Activated CD8-positive, alpha-beta memory T cell treated with anti-CD3 and anti-CD28 coated beads, Interleukin-2, amount 10 ng/mL, durations not matched to agents 7 days and 5 days (primary cell): ENCODE measurements at regions of chr17 and their contacts with region 1.

Region 1: GRCh38 chr17:74296548-74296936 is 22.5 kb downstream of the DNAI2 start:
- DNase-seq: peak; percentile 64
- ATAC-seq: no peak
- H3K4me3 Mint-ChIP-seq: no peak overlapping the region
- H3K27ac Mint-ChIP-seq: no peak overlapping the region
- H3K4me1 Mint-ChIP-seq: peaks cover 23% of the 10 kb centered on the region
- H3K27me3 Mint-ChIP-seq: peaks cover 3% of the 10 kb centered on the region

Region 2: DNA sequence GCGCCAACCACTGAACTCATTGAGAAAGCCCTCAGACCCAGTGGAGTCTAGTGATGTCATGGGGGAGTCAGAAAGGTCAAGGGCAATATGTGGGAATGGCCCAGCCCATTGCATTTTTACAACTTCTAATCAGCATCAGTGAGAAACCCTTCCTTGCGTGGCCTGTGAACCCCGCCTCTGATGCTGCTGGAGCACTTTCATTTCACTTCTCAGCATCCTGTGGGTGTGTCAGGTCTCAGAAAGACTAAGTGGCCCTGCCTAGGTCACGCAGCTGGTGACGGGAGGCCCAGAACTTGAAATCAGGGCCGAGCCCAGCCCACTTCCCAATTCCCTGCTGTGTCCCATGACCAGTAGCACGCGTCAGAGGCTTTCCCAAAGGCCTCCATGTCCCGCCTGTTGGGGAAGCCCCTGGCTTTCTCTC is 16.4 kb before region 1 on chr17:
- CTCF ChIA-PET with region 1: interaction called, 45 read pairs
- DNase-seq: peak; percentile 88
- ATAC-seq: peak; percentile 86
- H3K4me3 Mint-ChIP-seq: no peak overlapping the region
- H3K27ac Mint-ChIP-seq: peak overlapping the region; percentile 90
- H3K4me1 Mint-ChIP-seq: peaks cover 50% of the 10 kb centered on the region
- H3K27me3 Mint-ChIP-seq: no peaks in the 10 kb centered on the region